Left ventricle myocardium superior (tissue), 1 donor: ENCODE measurements at regions of chr2 and their contacts with region 1.

Region 1: DNA sequence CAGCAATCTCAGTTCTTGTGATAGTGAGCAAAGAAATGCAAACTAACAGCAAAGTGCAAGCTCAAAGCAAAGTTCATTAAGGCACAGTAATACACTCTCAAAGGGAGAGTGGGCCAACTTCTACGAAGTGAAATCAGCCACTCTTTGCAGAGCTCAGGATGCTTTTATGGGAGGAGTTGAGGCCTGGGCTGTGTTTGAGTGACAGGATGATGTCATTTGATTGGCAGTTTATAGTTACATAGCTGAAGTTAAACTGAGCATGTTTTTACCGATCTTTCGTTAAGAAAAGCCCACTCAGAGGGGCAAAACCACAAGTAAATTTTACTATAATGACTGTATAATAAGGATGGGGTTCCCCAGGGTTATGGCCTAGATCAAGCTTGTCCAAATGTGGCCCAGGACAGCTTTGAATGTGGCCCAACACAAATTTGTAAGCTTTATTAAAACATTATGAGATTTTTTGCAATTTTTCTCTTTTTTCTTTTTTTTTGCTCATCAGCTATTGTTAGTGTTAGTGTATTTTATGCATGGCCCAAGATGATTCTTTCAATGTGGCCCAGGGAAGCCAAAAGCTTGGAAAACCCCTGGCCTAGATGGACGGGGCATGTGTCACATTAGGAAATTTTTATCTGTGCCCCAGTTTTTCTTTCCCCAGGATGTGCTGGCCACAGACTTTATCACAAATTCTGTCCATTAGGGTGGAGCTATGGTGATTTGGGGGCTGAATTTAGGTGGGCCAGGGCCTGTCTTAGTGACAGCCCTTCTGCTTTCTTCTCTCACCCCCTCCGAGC is 8.3 kb upstream of the DNAH7 start:
- DNase-seq: no peak
- ATAC-seq: no peak

Region 2: GRCh38 chr2:195601361-195601760 is 475.6 kb before region 1 on chr2:
- intact Hi-C with region 1: no loop called
- DNase-seq: no peak
- ATAC-seq: no peak

Region 3: DNA sequence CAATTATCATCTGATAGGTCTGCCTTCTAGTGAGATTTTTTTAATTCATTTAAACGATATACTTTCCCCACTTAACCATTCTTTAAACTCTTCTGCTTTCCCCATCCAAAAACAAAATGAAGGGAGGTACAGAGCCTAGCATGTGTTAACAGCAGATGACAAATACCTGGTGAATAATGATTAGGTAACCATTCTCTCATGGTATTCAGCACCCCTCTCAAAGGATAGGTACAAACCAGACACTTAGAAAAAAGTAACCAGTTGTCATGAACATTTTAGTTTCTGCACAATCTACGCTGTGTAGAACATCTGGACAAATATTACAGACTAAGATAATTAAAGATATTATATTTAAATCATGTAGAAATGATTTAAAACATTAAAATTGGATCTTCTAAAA is 64.7 kb before region 1 on chr2:
- intact Hi-C with region 1: no loop called
- DNase-seq: no peak
- ATAC-seq: no peak

Region 4: GRCh38 chr2:196131384-196131937 is 54.5 kb after region 1 on chr2:
- intact Hi-C with region 1: no loop called
- DNase-seq: no peak
- ATAC-seq: no peak

Region 5: DNA sequence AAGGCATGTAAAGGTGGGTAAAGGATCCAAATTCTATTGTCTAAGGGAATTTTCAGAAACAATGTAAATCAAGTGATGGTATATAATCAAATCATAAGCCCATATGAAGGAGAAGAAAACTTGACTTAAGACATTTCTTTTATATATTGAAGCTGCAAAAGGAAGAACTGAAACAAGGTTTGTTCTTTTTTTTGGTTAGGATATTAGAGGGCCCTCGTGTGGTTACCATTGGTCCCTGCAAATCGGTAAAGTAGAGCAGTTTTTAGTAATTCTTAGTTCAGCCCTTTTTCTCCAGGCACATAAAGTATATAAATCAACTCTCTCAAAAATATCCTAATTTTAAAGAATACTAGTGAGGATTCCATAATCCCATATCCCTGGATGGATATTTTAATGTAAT is 200.0 kb after region 1 on chr2:
- intact Hi-C with region 1: loop called (anchors 10 kb)
- DNase-seq: no peak
- ATAC-seq: no peak